Caco-2 (cell line): ENCODE measurements at regions of chr9 and their contacts with region 1.

Region 1: GRCh38 chr9:112180387-112180881 is 5.3 kb upstream of the SUSD1 start:
- DNase-seq: peak; percentile 54 to 57
- H3K4me3 ChIP-seq: no peak overlapping the region
- H3K4me3 Mint-ChIP-seq: peak overlapping the region; percentile 55
- H3K27ac Mint-ChIP-seq: peak overlapping the region; percentile 88
- H3K4me1 ChIP-seq: peaks cover 56% of the 10 kb centered on the region
- H3K4me1 Mint-ChIP-seq: peaks cover 40% of the 10 kb centered on the region
- H3K27me3 ChIP-seq: no peaks in the 10 kb centered on the region
- H3K27me3 Mint-ChIP-seq: no peaks in the 10 kb centered on the region
- CTCF ChIP-seq: no peak

Region 2: GRCh38 chr9:111839388-111839787 is 341.0 kb before region 1 on chr9:
- CTCF ChIA-PET with region 1: no interaction called
- POLR2A ChIA-PET with region 1: no interaction called
- intact Hi-C with region 1: no loop called
- DNase-seq: no peak
- H3K4me3 ChIP-seq: no peak overlapping the region
- H3K4me3 Mint-ChIP-seq: peak overlapping the region; percentile 28
- H3K27ac Mint-ChIP-seq: peak overlapping the region; percentile 18
- H3K4me1 ChIP-seq: peaks cover 22% of the 10 kb centered on the region
- H3K4me1 Mint-ChIP-seq: peaks cover 11% of the 10 kb centered on the region
- H3K27me3 ChIP-seq: no peaks in the 10 kb centered on the region
- H3K27me3 Mint-ChIP-seq: no peaks in the 10 kb centered on the region
- CTCF ChIP-seq: no peak

Region 3: DNA sequence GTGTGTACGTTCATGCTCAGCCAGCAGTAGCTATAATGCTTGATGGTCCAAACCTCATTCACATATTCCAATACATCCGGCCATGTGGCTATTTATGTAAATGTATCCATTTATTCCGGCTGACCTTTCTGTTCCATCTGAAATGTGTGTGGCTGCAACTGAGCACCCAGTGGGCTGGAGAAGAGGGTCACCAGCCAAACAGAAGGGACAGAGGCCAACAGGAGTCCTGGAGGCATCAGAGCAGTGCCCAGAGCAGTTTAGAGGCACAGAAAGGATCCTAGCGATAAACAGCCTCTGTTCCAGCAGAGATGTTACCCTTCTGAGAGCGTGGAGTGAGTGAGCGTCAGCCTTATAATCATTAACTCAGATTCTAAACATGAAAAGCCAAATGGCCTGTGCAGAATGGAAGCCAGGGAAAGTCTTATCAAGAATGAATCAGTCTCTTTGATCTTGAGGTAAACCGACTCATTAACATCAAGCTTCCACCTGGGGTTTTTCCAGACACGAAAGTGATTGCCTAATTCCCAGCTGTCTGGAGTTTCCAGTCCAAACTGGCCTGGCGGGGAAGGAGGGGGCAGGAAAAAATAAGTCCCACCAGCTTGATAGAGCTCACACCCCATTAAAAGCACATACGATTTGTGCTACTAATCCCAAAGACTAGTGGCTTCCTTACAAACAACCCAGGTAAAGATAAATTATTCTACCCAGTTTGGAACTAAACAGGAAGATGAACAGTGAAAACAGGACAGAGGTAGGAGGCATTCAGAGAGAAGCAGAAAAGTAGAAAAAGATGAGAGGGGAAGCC is 61.0 kb before region 1 on chr9:
- CTCF ChIA-PET with region 1: interaction called, 9 read pairs
- POLR2A ChIA-PET with region 1: interaction called, 3 read pairs
- intact Hi-C with region 1: loop called (anchors 1 kb)
- DNase-seq: peak; percentile 89 to 91
- H3K4me3 ChIP-seq: no peak overlapping the region
- H3K4me3 Mint-ChIP-seq: peak overlapping the region; percentile 45
- H3K27ac Mint-ChIP-seq: peak overlapping the region; percentile 96
- H3K4me1 ChIP-seq: peaks cover 54% of the 10 kb centered on the region
- H3K4me1 Mint-ChIP-seq: peaks cover 51% of the 10 kb centered on the region
- H3K27me3 ChIP-seq: no peaks in the 10 kb centered on the region
- H3K27me3 Mint-ChIP-seq: no peaks in the 10 kb centered on the region
- CTCF ChIP-seq: no peak

Region 4: DNA sequence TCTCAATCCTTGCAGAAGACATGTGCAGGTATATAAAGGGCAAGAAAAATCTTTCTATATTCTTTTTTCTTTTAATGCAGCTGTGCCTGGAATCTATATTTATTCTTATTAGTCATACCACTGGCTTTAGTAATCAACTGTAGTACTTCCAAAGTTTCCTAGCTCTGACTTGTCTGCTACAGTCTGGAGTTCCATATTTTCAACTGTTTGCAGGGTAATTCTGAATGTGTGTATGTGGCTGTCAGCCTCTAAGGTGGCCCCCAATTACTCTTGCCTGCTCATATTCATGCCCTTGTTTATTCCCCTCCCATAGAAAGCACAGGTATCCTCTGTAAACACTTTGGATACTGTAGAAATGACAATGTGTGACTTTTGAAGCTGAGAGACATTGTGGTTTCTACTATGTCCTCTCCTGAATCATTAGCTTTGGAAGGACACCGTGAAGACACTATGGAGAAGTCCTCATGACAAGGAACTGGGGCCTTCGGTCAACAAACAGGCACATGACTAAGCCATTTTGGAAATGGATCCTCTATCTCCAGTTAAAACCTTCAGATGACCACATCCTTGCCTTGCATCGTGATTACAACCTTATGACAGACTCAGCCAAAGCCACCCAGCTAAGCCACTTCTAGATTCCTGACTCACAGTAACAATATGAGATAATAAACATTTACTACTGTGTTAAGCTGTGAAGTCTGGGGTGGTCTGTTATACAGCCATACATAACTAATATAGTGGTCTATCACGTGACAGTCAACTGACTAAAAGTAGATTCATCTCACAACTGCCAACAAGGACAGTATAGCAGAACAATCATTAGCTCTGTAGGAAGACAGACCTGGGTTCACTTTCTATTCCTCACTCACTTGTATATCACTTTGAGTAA is 44.2 kb after region 1 on chr9:
- CTCF ChIA-PET with region 1: no interaction called
- POLR2A ChIA-PET with region 1: no interaction called
- intact Hi-C with region 1: no loop called
- DNase-seq: no peak
- H3K4me3 ChIP-seq: no peak overlapping the region
- H3K4me3 Mint-ChIP-seq: no peak overlapping the region
- H3K27ac Mint-ChIP-seq: no peak overlapping the region
- H3K4me1 ChIP-seq: no peaks in the 10 kb centered on the region
- H3K4me1 Mint-ChIP-seq: no peaks in the 10 kb centered on the region
- H3K27me3 ChIP-seq: no peaks in the 10 kb centered on the region
- H3K27me3 Mint-ChIP-seq: no peaks in the 10 kb centered on the region
- CTCF ChIP-seq: no peak

Region 5: GRCh38 chr9:113095561-113095960 is 915.1 kb after region 1 on chr9:
- CTCF ChIA-PET with region 1: no interaction called
- POLR2A ChIA-PET with region 1: no interaction called
- intact Hi-C with region 1: no loop called
- DNase-seq: no peak
- H3K4me3 ChIP-seq: no peak overlapping the region
- H3K4me3 Mint-ChIP-seq: no peak overlapping the region
- H3K27ac Mint-ChIP-seq: no peak overlapping the region
- H3K4me1 ChIP-seq: no peaks in the 10 kb centered on the region
- H3K4me1 Mint-ChIP-seq: no peaks in the 10 kb centered on the region
- H3K27me3 ChIP-seq: no peaks in the 10 kb centered on the region
- H3K27me3 Mint-ChIP-seq: no peaks in the 10 kb centered on the region
- CTCF ChIP-seq: no peak